MCF 10A (cell line): ENCODE measurements at regions of chr4 and their contacts with region 1.

Region 1: GRCh38 chr4:90317785-90318184 is 190.6 kb downstream of the CCSER1 start:
- DNase-seq: peak; percentile 84
- H3K4me3 Mint-ChIP-seq: peak overlapping the region; percentile 36
- H3K27ac Mint-ChIP-seq: peak overlapping the region; percentile 81
- H3K4me1 Mint-ChIP-seq: peaks cover 7% of the 10 kb centered on the region
- H3K27me3 Mint-ChIP-seq: no peaks in the 10 kb centered on the region
- CTCF ChIP-seq: no peak

Region 2: GRCh38 chr4:89788206-89789072 is 529.3 kb before region 1 on chr4:
- CTCF ChIA-PET with region 1: no interaction called
- POLR2A ChIA-PET with region 1: no interaction called
- intact Hi-C with region 1: no loop called
- DNase-seq: peak; percentile 18
- H3K4me3 Mint-ChIP-seq: no peak overlapping the region
- H3K27ac Mint-ChIP-seq: no peak overlapping the region
- H3K4me1 Mint-ChIP-seq: peaks cover 10% of the 10 kb centered on the region
- H3K27me3 Mint-ChIP-seq: no peaks in the 10 kb centered on the region
- CTCF ChIP-seq: no peak

Region 3: DNA sequence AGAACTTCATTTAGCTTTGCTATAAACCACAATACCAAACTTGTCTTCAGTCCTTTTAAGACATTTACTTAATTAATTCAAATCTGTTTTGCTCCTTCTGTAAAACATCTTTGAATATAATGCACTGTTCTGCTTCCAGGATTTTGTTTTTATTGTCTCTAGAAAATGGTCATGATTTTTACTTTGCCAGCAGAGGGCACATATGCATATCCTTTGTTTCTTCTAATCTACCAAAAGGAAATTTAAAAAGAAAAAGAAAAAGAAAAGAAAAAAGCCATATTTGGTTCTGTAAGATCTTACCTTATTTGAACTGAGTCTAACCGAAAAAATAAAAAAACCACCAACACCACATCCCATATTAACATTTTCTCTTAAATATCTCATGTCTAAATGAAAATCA is 292.5 kb before region 1 on chr4:
- CTCF ChIA-PET with region 1: no interaction called
- POLR2A ChIA-PET with region 1: no interaction called
- intact Hi-C with region 1: no loop called
- DNase-seq: peak; percentile 20
- H3K4me3 Mint-ChIP-seq: no peak overlapping the region
- H3K27ac Mint-ChIP-seq: no peak overlapping the region
- H3K4me1 Mint-ChIP-seq: no peaks in the 10 kb centered on the region
- H3K27me3 Mint-ChIP-seq: no peaks in the 10 kb centered on the region
- CTCF ChIP-seq: peak; percentile 14

Region 4: DNA sequence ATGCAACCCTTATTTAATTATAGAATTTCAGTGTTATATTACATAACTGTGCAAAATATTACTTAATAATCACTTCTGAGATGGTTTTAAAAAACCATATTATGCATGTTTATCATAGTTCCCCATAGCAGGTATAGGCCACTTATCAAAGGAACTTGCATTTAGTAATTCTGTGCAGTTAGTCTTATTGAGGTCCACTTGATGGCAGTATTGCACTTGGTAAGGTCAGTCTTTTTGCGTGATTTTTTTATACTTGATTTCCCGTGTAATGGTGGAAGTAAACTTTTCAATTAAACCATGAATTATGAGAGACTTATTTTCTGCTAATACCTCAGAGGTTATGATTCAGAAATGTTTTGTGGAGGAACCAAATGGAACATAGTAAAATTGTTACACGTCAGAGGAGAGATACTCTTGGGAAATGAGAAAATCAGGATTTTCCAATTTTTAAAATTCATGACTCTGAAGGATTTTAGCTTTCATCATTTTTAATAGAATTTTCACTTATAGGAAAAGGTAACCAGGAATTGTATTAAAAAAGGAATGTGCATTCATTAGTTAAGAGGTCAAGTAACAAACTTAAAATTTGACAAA is 39.4 kb after region 1 on chr4:
- CTCF ChIA-PET with region 1: no interaction called
- POLR2A ChIA-PET with region 1: interaction called, 3 read pairs
- intact Hi-C with region 1: loop called (anchors 1 kb)
- DNase-seq: peak; percentile 78
- H3K4me3 Mint-ChIP-seq: no peak overlapping the region
- H3K27ac Mint-ChIP-seq: no peak overlapping the region
- H3K4me1 Mint-ChIP-seq: no peaks in the 10 kb centered on the region
- H3K27me3 Mint-ChIP-seq: no peaks in the 10 kb centered on the region
- CTCF ChIP-seq: peak; percentile 70

Region 5: GRCh38 chr4:90419124-90419711 is 101.4 kb after region 1 on chr4:
- CTCF ChIA-PET with region 1: no interaction called
- POLR2A ChIA-PET with region 1: no interaction called
- intact Hi-C with region 1: loop called (anchors 1 kb)
- DNase-seq: peak; percentile 61
- H3K4me3 Mint-ChIP-seq: no peak overlapping the region
- H3K27ac Mint-ChIP-seq: no peak overlapping the region
- H3K4me1 Mint-ChIP-seq: no peaks in the 10 kb centered on the region
- H3K27me3 Mint-ChIP-seq: no peaks in the 10 kb centered on the region
- CTCF ChIP-seq: peak; percentile 56

Region 6: GRCh38 chr4:90951027-90951426 is 633.2 kb after region 1 on chr4:
- CTCF ChIA-PET with region 1: no interaction called
- POLR2A ChIA-PET with region 1: no interaction called
- intact Hi-C with region 1: loop called (anchors 5 kb)
- DNase-seq: peak; percentile 93
- H3K4me3 Mint-ChIP-seq: peak overlapping the region; percentile 38
- H3K27ac Mint-ChIP-seq: peak overlapping the region; percentile 81
- H3K4me1 Mint-ChIP-seq: peaks cover 11% of the 10 kb centered on the region
- H3K27me3 Mint-ChIP-seq: no peaks in the 10 kb centered on the region
- CTCF ChIP-seq: no peak

Region 7: GRCh38 chr4:90970021-90970420 is 652.2 kb after region 1 on chr4:
- CTCF ChIA-PET with region 1: no interaction called
- POLR2A ChIA-PET with region 1: no interaction called
- intact Hi-C with region 1: loop called (anchors 5 kb)
- DNase-seq: no peak
- H3K4me3 Mint-ChIP-seq: no peak overlapping the region
- H3K27ac Mint-ChIP-seq: no peak overlapping the region
- H3K4me1 Mint-ChIP-seq: no peaks in the 10 kb centered on the region
- H3K27me3 Mint-ChIP-seq: no peaks in the 10 kb centered on the region
- CTCF ChIP-seq: no peak